ENCODE measurements at regions of chr10 and their contacts with region 1.

Region 1: DNA sequence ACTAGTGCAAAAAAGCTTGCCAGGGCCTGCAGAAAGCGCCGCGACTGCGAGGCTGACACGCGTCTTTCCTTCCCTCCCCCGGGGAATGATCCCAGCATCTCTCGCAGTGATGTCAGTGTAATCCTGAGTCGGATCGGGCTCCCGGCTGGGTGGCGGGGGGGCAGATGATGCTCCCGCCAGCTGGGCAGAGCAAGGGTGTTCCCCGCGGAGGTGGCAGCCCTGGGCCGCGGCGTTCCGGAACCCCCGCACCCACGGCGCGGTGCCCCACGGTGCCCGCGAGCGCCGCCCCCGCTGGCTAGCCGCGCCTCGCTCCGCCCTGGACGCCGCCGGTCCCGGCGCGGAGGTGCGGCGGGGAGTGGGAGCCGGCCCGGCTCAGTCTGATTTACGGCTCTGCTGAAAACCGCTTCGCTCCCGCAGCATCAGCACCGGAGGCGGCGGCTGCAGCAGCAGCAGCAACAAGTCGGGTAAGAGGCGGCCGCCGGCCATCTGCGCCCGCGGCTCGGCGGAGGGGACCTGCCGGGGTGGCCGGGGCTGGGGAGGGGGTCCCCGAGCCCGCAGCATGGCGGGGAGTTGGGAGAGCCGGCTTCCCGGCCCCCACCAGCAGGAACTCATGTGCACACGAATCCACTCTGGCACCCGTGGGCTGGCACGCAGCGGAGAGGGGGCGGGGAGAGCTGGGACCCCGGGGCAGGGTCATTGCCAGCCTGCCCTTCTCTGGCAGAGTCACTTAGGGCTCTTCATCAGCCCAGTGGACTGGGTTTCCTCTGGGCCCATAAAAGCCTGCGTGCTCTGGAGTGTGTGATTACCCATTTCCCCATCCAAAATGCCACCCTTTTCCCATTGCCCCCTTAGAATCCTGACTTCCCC is at the start of gene ZNF365:
- DNase-seq: no peak
- H3K4me3 ChIP-seq: peak within 1 kb of the TSS; percentile 44 to 47
- H3K27ac ChIP-seq: peak within 1 kb of the TSS; percentile 31 to 48
- H3K4me1 ChIP-seq: no peaks in the 10 kb centered on the region
- H3K27me3 ChIP-seq: no peaks in the 10 kb centered on the region
- CTCF ChIP-seq: no peak
- POLR2A ChIP-seq: no peak
- total RNA-seq, gene ZNF365: 0.55 to 3.5 TPM

Region 2: GRCh38 chr10:62038609-62039190 is 335.5 kb before region 1 on chr10:
- intact Hi-C with region 1: loop called (anchors 10 kb)
- DNase-seq: peak; percentile 70
- H3K4me3 ChIP-seq: no peak overlapping the region
- H3K27ac ChIP-seq: peak overlapping the region; percentile 54 to 69
- H3K4me1 ChIP-seq: peaks cover 11% of the 10 kb centered on the region
- H3K27me3 ChIP-seq: no peaks in the 10 kb centered on the region
- CTCF ChIP-seq: peak; percentile 70 to 82 (median 80)
- POLR2A ChIP-seq: no peak

Measured in prostate gland (tissue), 2 donors.